Esophagus squamous epithelium (tissue), 5 donors: ENCODE measurements at regions of chr14 and their contacts with region 1.

Region 1: DNA sequence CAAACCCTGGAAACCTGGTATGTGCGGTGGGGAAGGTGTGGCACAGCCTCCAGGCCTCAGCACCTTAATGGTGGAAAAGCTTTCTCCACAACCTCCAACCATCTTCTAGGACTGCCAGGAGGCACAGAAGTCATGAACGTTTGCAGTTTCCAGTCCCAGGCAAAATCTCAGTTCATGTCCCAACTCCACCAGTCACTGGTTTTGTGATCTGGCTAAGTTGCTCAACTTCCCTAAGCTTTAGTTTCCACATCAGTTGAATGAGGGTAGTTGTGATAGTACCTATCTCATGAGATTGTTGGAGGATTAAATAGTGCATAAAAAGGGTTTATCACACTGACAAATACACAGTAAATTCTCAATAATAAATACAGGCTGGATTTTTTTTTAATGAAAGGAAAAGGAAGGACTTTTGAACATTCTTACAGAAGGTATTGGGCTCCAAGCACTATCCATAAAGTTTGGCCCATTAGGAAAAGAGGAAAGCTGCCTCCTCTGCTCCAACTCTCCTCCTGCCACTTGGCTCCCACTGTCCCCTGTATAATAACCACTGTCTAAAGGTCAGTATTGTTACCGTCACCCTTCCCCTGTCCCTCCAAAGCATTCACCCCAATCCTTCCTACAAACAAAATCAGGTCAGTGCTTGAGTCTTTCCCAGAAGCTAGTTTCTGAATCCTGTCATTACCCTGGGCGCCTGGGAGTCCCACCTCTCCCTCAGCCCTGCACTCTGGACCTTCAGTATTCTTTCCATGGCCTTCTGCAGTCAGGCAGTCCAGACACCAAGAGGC is 6.3 kb downstream of the PCK2 start:
- DNase-seq: no peak
- H3K4me3 ChIP-seq: no peak overlapping the region
- H3K27ac ChIP-seq: no peak overlapping the region
- H3K4me1 ChIP-seq: peaks cover 4 to 5% (median 4%) of the 10 kb centered on the region in 3 donors
- H3K27me3 ChIP-seq: no peaks in the 10 kb centered on the region
- CTCF ChIP-seq: no peak
- POLR2A ChIP-seq: no peak

Region 2: DNA sequence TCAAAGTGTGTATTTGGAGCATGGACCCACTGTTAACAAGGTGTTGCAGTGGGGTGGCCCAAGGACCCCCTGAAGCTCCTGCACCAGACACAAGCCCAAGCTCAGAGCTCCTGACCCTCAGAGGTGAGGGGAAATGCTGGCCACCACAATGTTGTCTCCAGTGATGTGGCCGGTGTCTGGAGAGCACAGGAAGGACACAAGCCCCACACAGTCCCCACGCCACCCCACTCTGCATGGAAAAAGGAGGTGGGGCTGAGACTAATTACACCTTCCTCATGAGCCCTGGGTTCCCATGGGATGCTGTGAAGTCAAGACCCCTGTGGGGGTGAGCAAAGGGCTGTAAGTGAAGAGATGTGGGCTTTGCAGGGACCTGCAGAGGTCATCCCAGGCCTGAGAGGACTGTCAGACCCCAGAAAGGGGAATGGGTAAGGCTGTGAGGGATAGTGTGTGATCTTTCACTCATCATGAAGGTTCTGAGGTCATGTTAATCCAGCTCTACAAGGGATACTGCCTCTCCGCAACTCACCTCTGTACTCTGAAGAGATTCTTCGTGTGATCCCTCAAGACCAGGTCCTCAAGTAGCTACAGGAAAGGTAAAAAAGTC is 283.1 kb before region 1 on chr14:
- intact Hi-C with region 1: no loop called
- DNase-seq: no peak
- H3K4me3 ChIP-seq: no peak overlapping the region
- H3K27ac ChIP-seq: no peak overlapping the region
- H3K4me1 ChIP-seq: no peaks in the 10 kb centered on the region
- H3K27me3 ChIP-seq: no peaks in the 10 kb centered on the region
- CTCF ChIP-seq: no peak
- POLR2A ChIP-seq: no peak

Region 3: DNA sequence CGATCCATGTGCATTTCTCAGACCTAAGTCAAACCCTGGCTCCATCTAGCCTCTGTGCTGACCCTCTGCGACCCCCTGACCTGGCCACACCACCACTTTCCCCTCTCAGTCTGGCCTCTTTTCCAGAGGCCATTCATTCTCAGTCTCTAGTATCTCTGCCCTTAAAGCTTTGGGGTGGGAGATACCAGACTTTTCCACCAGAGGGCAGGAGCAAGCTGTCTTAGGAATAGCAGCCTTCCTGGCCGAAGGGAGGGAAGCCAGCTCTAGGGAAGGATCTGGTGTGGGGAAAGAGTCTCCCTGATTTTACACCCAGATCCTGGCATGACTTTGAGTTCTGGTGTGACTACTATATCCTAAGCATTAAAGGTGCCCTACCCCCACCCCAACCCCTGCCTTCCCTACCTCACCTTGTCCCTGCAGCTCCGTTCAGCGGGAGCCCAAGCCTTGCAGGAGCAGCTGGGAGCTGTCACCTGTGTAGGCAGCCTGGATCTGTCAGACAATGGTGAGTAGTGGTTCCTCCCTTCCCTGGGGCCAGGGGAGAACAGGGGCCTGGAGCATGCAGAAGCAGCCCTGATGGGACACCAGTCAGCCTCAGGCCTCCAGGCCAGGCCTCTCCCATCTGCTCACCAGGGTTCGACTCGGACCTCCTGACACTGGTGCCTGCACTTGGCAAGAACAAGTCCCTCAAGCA is 42.0 kb before region 1 on chr14:
- intact Hi-C with region 1: loop called (anchors 5 kb)
- DNase-seq: no peak
- H3K4me3 ChIP-seq: no peak overlapping the region
- H3K27ac ChIP-seq: no peak overlapping the region
- H3K4me1 ChIP-seq: peaks cover 0 to 10% (median 0%) of the 10 kb centered on the region in 3 donors
- H3K27me3 ChIP-seq: peaks cover 0 to 19% (median 0%) of the 10 kb centered on the region in 4 donors
- CTCF ChIP-seq: peak; percentile 68 to 93 (median 84)
- POLR2A ChIP-seq: no peak